OCI-LY7 (cell line): ENCODE measurements at regions of chr1 and their contacts with region 1.

Region 1: DNA sequence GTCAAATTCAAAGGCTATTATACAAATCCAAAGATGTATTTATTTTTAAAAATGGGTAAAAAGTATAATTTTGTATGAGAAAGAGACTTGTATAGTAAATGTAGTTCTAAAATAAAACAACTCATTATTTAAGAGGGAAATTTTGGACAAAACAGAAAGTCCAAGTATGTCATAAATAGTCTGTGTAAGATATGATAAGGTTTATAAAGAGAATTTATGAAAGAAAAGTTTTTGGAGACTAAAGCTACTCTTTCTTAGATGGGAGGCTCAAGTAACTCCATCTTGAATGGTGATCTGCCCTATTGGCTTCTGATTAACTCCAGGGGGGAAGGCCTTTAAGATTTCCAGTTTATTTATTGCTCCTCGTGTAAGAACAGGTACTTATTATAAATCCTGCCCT is 14.7 kb upstream of the OR2T27 start:
- DNase-seq: peak; percentile 15
- H3K4me3 ChIP-seq: no peak overlapping the region
- H3K27ac ChIP-seq: no peak overlapping the region
- H3K4me1 ChIP-seq: no peaks in the 10 kb centered on the region
- CTCF ChIP-seq: no peak

Region 2: GRCh38 chr1:248730507-248731335 is 60.7 kb after region 1 on chr1:
- CTCF ChIA-PET with region 1: no interaction called
- POLR2A ChIA-PET with region 1: no interaction called
- intact Hi-C with region 1: loop called (anchors 10 kb)
- DNase-seq: no peak
- H3K4me3 ChIP-seq: no peak overlapping the region
- H3K27ac ChIP-seq: no peak overlapping the region
- H3K4me1 ChIP-seq: no peaks in the 10 kb centered on the region
- CTCF ChIP-seq: no peak